ENCODE measurements at regions of chr6 and their contacts with region 1.

Region 1: DNA sequence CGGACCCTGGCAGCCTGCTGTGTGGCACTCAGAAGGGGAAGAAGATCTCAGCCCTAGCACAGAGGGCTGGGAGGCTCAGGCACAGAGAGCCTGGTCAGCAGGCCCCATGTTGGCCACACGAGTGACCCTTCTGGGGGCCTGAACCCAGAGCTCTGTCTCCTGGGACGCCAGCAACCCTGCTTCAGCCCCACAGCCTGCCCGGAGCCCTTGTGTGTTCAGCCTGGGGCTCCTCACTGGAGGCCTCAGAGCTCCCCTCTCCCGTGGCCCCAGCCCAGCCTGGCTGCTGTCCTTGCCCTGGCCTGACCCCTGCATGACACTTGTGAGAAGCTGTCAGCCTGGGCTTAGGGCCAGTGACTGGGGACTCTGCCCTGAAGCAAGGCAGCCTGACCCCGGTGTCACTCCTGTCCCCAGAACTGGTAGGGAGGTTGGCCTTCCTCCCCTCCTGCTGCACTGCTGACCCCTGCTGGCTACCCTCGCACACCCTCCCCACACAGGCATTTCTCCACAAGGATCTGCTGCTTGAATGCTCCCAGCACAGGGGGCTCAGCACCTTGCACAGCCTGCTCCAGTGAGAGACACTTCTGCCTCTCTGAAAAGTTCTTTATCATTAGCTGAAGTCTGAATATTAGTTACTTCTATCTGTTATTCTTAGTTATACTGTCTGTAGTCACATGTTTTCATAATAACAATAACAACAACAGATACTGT is 15.4 kb upstream of the IP6K3 start:
- DNase-seq: peak; percentile 87
- ATAC-seq: peak; percentile 92
- H3K4me3 ChIP-seq: peak overlapping the region in 1 of 3 experiments; percentile 41; a peak in 1 of 6 replicates
- H3K27ac ChIP-seq: peak overlapping the region; percentile 39
- H3K4me1 ChIP-seq: peaks cover 36% of the 10 kb centered on the region
- H3K27me3 ChIP-seq: peaks cover 7% of the 10 kb centered on the region in 2 experiments; a peak in 3 of 5 replicates
- CTCF ChIP-seq: peak; percentile 100
- EP300 ChIP-seq: peak in 1 of 2 experiments; percentile 72; a peak in 2 of 4 replicates
- POLR2A ChIP-seq: no peak; a peak in 1 of 4 replicates
- RAD21 ChIP-seq: peak; percentile 99

Region 2: DNA sequence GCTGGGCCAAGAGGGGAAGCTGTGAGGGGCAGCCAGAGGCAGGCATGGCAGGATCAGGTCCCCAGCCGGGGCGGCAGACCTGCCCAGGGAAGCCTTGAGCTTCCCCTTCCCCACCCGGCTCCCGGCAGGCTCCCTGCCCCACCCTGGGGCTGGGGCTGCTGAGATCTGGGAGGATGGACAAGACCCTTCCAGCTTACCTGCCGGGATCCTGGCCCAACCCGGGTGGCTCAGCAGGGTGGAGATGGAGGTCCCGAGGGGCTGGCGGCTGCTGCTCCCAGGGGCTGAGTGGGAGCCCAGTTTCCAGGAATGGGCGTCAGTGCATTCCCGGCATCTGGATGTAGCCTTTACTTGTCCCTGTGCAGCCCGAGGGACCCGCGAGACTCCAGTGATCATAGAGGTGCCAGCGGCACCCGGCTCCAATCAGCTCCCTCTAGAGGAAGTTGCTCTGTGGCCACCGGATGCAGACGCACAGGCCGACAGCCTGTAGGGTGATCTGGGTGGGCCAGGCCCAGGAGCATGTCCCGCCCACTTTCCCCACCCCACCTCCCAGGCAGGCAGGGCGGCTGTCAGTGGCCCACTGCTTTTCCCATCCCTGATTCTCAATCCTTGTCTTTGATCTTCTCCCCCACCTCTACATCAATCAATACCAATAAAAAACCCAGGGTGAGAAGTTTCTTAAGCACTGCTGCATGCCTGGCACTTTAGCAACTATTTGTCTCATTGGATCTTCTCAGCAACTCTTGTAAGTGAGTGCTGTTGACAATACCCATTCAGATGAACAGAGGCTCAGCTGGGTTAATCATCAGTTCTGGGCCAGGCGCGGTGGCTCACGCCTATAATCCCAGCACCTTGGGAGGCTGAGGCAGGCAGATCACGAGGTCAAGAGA is 182.0 kb before region 1 on chr6 and contains the start of gene BAK1:
- CTCF ChIA-PET with region 1: interaction called, 5 read pairs
- POLR2A ChIA-PET with region 1: interaction called, 3 read pairs
- in situ Hi-C with region 1: loop called (anchors 5 kb)
- intact Hi-C with region 1: no loop called
- DNase-seq: peak; percentile 93
- ATAC-seq: peak; percentile 97
- H3K4me3 ChIP-seq: peak within 1 kb of the TSS; percentile 77 to 91 (median 83)
- H3K27ac ChIP-seq: peak within 1 kb of the TSS; percentile 48
- H3K4me1 ChIP-seq: peaks cover 34% of the 10 kb centered on the region
- H3K27me3 ChIP-seq: no peaks in the 10 kb centered on the region
- CTCF ChIP-seq: peak; percentile 91
- EP300 ChIP-seq: no peak
- POLR2A ChIP-seq: peak; percentile 63 to 72; a peak in 3 of 4 replicates
- RAD21 ChIP-seq: peak; percentile 66
- total RNA-seq, gene BAK1: 23.8 and 25.9 TPM in 2 replicates

Region 3: DNA sequence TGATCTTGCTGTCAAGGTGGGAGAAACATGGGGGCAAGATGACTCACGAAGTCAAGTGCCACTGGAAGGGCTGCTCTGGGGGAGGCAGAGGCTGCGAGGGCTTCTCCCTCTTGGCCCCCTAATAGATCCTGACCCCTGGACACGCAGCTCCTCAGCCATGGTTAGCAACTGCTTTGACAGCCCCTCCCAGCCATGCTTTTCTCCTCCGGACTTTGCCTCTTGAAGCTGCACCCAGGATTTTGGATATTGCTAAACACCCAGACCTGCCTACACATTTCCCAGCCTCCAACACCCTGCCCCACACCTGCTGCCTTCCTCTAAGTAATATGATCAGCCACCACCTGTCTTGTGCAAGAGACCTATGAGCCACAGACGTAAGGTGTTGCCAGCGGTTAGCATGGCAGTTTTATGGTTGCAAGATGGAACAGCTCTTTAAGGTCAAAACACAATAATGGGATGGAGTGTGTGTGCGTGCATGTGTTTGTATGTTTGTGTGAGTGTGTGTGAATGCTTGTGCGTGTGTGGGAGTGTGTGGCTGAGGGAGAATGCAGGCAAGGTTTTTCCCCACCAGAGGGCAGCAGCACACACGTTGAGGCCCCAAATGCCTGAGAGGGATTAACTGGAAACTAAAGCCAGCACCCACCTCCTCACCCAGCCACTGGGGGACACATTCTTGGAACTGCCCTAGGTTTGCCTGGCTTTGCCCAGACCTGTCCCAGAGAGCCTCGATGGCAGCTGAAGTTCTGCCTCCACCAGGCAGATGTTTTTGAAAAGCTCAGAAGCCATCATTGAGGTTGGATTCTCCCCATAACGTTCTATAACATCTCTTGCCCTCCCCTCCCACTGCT is 17.9 kb before region 1 on chr6:
- CTCF ChIA-PET with region 1: interaction called, 77 read pairs
- POLR2A ChIA-PET with region 1: interaction called, 48 read pairs
- in situ Hi-C with region 1: no loop called
- intact Hi-C with region 1: loop called (anchors 1 kb)
- DNase-seq: peak; percentile 78
- ATAC-seq: peak; percentile 73
- H3K4me3 ChIP-seq: 0 out of 6 replicates have a peak overlapping the region, but pooled peaks of 1 of the 3 experiments have one; percentile 15
- H3K27ac ChIP-seq: no peak overlapping the region
- H3K4me1 ChIP-seq: peaks cover 58% of the 10 kb centered on the region
- H3K27me3 ChIP-seq: peaks cover 4 to 38% of the 10 kb centered on the region in 2 experiments; a peak in 4 of 5 replicates
- CTCF ChIP-seq: peak; percentile 98
- EP300 ChIP-seq: 0 out of 4 replicates have a peak, but pooled peaks of 1 of the 2 experiments have one; percentile 9
- POLR2A ChIP-seq: no peak
- RAD21 ChIP-seq: peak; percentile 87

Region 4: GRCh38 chr6:33751771-33752645 is 10.1 kb before region 1 on chr6:
- CTCF ChIA-PET with region 1: interaction called, 77 read pairs
- POLR2A ChIA-PET with region 1: interaction called, 48 read pairs
- in situ Hi-C with region 1: no loop called
- intact Hi-C with region 1: no loop called
- DNase-seq: no peak
- ATAC-seq: peak; percentile 33
- H3K4me3 ChIP-seq: no peak overlapping the region
- H3K27ac ChIP-seq: no peak overlapping the region
- H3K4me1 ChIP-seq: peaks cover 33% of the 10 kb centered on the region
- H3K27me3 ChIP-seq: peaks cover 4 to 29% of the 10 kb centered on the region in 2 experiments; a peak in 4 of 5 replicates
- CTCF ChIP-seq: no peak
- EP300 ChIP-seq: no peak
- POLR2A ChIP-seq: no peak
- RAD21 ChIP-seq: no peak